Adrenal gland (tissue), 19 donors: ENCODE measurements at regions of chr3 and their contacts with region 1.

Region 1: GRCh38 chr3:11335056-11335608 is 62.9 kb downstream of the ATG7 start:
- DNase-seq: peak in 3 of 7 donors; percentile 20 to 34 (median 24)
- H3K4me3 ChIP-seq: no peak overlapping the region
- H3K27ac ChIP-seq: no peak overlapping the region
- H3K4me1 ChIP-seq: peaks cover 4 to 9% of the 10 kb centered on the region in 2 donors
- H3K27me3 ChIP-seq: no peaks in the 10 kb centered on the region
- CTCF ChIP-seq: peak; percentile 58 to 84 (median 80)
- POLR2A ChIP-seq: no peak

Region 2: GRCh38 chr3:10945683-10946287 is 389.3 kb before region 1 on chr3:
- intact Hi-C with region 1: loop called in 1 of 2 experiments (anchors 10 kb)
- DNase-seq: peak in 6 of 7 donors; percentile 43 to 71 (median 58)
- H3K4me3 ChIP-seq: no peak overlapping the region
- H3K27ac ChIP-seq: no peak overlapping the region
- H3K4me1 ChIP-seq: no peaks in the 10 kb centered on the region
- H3K27me3 ChIP-seq: peaks cover 9% of the 10 kb centered on the region
- CTCF ChIP-seq: peak; percentile 62 to 81 (median 70)
- POLR2A ChIP-seq: no peak

Region 3: GRCh38 chr3:11059090-11059798 is 275.9 kb before region 1 on chr3:
- intact Hi-C with region 1: loop called in 1 of 2 experiments (anchors 5 kb)
- DNase-seq: peak; percentile 44 to 77 (median 64)
- H3K4me3 ChIP-seq: no peak overlapping the region
- H3K27ac ChIP-seq: no peak overlapping the region
- H3K4me1 ChIP-seq: no peaks in the 10 kb centered on the region
- H3K27me3 ChIP-seq: peaks cover 7% of the 10 kb centered on the region
- CTCF ChIP-seq: peak; percentile 57 to 79 (median 74)
- POLR2A ChIP-seq: no peak

Region 4: DNA sequence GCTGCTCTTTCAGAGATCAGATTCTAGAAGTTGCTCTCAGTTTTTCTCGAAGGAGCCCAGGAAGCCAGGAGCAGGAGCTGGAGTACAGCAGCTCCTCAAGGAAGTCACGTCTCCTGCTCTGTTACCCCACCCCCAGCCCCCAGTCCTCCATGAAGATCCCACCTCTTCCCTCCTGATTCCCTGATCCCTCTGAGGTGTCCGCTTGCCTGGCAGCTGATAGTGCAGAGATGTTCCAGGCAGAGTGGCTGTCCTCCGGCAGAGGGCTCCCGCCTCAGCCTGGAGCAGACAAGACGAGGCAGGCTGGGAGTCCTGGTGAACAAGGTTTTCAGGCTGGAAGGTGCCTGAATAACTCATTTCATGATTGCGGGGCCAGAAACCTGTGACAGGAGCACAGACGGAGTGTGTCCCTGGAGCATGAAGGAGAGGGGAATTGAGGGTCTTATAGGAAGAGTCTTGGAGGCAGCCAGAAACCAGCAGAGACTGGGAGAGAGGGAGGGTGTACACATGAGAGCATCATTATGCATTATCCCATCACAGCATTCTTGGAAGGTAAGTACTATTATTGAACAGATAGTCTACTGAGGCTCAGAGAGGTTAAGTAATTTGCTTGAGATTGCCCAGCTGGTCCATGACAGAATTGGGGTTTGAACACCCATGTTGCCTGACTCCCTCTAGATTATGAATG is 179.6 kb before region 1 on chr3:
- intact Hi-C with region 1: loop called in 1 of 2 experiments (anchors 10 kb)
- DNase-seq: peak; percentile 60 to 92 (median 71)
- H3K4me3 ChIP-seq: peak overlapping the region in 1 of 4 donors; percentile 52
- H3K27ac ChIP-seq: peak overlapping the region in 1 of 5 donors; percentile 67
- H3K4me1 ChIP-seq: peaks cover 0 to 14% of the 10 kb centered on the region in 2 donors
- H3K27me3 ChIP-seq: peaks cover 11% of the 10 kb centered on the region
- CTCF ChIP-seq: peak; percentile 42 to 70 (median 61)
- POLR2A ChIP-seq: no peak

Region 5: DNA sequence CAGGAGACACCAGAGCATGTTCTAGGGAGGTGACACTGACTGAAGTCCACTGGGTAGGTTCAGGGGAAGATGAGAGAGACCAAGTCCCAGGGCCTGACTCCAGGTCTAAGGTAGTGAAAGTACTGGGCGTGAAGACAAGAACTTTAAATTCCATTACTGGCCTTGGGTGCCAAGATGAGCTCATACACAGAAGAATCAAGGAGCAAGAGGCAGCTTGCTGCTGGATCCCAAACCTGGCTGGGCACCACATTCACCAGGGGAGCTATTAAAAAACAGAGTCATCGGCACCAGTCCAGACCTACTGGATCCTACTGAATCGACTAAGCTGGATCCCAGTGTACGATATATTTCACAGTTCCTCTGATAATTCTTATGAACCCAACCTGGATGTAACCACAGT is 105.0 kb before region 1 on chr3:
- intact Hi-C with region 1: loop called (anchors 5 kb)
- DNase-seq: peak in 1 of 7 donors; percentile 30
- H3K4me3 ChIP-seq: no peak overlapping the region
- H3K27ac ChIP-seq: no peak overlapping the region
- H3K4me1 ChIP-seq: peaks cover 0 to 4% of the 10 kb centered on the region in 2 donors
- H3K27me3 ChIP-seq: no peaks in the 10 kb centered on the region
- CTCF ChIP-seq: no peak
- POLR2A ChIP-seq: no peak

Region 6: DNA sequence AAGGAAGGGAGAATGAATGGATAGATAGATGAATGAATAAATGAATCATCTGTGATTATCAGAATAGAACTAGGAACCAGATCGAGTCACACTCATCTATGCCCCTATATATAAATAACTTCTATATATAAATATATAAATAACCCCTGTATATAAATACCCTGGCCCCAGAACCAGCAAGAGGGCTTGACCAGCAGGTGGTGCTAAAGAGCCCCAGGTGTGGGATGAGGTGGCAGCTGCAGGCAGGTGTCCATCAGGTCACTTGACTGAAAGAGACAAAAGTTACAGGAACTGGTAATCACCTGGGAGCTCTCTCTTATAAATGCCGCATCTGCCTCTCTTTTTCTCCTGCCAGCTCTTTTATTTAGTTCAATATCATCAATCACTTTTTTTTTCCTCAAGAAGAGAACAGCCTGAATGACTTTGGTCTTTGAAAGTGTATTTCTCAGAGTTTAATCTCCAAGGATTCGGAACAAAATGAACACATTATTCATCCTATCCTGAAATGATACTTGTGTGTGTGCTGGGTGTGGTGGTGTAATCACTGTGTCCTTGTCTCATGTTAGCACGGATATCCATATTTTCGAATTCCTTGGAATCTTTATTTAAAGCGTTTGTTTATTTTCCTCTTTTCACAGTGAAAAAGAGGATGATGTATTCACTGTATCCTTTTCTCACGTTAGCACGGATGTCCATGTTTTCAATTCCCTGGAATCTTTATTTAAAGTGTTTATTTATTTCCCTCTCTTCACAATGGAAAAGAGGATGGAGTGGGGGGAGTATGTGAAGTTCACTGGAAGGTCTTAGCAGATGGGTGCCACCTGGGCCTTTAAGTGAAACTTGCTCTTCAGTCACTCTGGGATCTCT is 98.3 kb before region 1 on chr3:
- intact Hi-C with region 1: loop called (anchors 5 kb)
- DNase-seq: peak; percentile 21 to 78 (median 62)
- H3K4me3 ChIP-seq: no peak overlapping the region
- H3K27ac ChIP-seq: no peak overlapping the region
- H3K4me1 ChIP-seq: no peaks in the 10 kb centered on the region
- H3K27me3 ChIP-seq: no peaks in the 10 kb centered on the region
- CTCF ChIP-seq: peak; percentile 32 to 81 (median 66)
- POLR2A ChIP-seq: no peak